AG04449 (cell line): ENCODE measurements at regions of chr9 and their contacts with region 1.

Region 1: GRCh38 chr9:136225748-136226679 is 19.6 kb downstream of the QSOX2 start:
- DNase-seq: no peak
- H3K4me3 ChIP-seq: no peak overlapping the region
- CTCF ChIP-seq: peak; percentile 91

Region 2: DNA sequence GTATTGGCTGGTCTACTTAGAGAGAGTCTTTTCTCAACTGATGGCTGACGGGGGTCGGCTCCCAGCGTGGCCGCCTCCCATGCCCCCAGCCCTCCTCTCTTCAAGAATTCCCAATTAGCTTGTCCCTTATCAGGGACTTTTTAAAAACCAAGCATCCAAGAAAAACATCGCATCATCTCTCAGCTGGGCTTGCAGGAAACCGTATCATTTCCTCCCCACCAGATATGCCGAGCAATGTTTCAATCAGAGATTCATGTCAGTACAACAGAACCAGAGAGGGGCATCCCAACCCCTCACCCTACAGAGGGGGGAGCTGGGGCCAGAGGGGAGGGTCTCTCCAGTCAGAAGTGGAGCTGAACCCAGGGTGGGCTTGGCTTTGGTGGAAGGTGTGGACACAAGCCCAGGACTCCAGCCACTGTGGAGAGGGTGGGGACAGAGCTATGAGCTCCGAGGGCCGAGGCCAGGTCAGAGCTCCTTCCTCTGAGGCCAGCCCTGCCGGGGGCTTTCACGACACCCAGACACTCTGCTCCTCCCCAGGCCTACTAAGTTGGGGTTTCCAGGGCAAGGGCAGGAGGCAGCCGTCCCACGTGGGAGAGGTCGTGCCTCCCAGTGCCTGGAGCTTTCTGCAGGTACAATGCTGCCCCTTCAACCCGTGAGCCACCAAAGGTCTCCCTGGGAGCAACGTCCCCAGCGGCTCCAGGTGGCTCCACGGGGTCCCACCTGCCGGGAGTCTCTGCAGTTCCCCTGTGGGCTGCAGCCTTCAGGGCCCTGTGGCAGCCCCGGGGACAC is 68.3 kb before region 1 on chr9:
- CTCF ChIA-PET with region 1: no interaction called
- POLR2A ChIA-PET with region 1: no interaction called
- DNase-seq: no peak
- H3K4me3 ChIP-seq: no peak overlapping the region
- CTCF ChIP-seq: no peak

Region 3: DNA sequence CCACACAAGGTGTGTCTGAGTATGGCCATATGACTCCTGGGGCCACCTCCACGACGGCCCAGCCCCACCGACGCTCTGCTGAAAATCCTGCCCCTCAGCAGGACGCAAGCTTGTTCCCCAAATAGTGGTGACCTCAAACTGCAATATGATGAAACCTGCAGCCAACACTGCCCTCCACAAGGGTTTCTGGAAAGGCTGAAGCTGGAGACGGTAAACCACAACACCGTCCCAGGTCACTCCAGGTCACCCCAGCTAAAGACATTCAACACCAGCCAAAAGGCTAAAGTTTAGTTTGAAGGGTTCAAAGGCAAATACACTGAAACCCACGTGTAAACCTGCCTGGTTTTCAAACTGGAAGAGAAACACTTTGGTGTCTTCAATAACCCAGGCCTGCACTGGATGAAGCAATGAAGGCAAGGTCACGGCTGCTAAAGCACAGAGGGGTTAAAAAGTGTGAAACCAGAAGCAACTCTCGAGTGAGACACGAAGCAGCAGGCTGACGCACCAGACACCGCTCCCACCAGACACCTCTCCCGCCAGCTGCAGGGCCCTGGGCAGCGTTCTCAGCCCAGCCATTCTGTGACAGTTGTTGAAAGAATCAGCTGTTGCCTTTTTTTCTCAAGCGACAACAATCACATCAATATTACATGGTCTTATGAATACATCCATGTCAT is 19.3 kb before region 1 on chr9:
- CTCF ChIA-PET with region 1: interaction called, 11 read pairs
- POLR2A ChIA-PET with region 1: no interaction called
- DNase-seq: no peak
- H3K4me3 ChIP-seq: no peak overlapping the region
- CTCF ChIP-seq: no peak

Region 4: GRCh38 chr9:136244122-136244968 is 18.3 kb after region 1 on chr9:
- CTCF ChIA-PET with region 1: interaction called, 17 read pairs
- POLR2A ChIA-PET with region 1: no interaction called
- DNase-seq: no peak
- H3K4me3 ChIP-seq: peak overlapping the region; percentile 71
- CTCF ChIP-seq: no peak